ENCODE measurements at regions of chr2 and their contacts with region 1.

Region 1: GRCh38 chr2:37357530-37357929 is 13.1 kb downstream of the QPCT start:
- DNase-seq: no peak
- ATAC-seq: no peak
- H3K4me3 Mint-ChIP-seq: no peak overlapping the region
- H3K27ac Mint-ChIP-seq: no peak overlapping the region
- H3K4me1 Mint-ChIP-seq: peaks cover 3% of the 10 kb centered on the region
- H3K27me3 Mint-ChIP-seq: peaks cover 8% of the 10 kb centered on the region
- CTCF ChIP-seq: no peak

Region 2: GRCh38 chr2:38060236-38061018 is 702.9 kb after region 1 on chr2:
- CTCF ChIA-PET with region 1: no interaction called
- POLR2A ChIA-PET with region 1: interaction called, 11 read pairs
- intact Hi-C with region 1: no loop called
- DNase-seq: no peak
- ATAC-seq: no peak
- H3K4me3 Mint-ChIP-seq: no peak overlapping the region
- H3K27ac Mint-ChIP-seq: no peak overlapping the region
- H3K4me1 Mint-ChIP-seq: no peaks in the 10 kb centered on the region
- H3K27me3 Mint-ChIP-seq: peaks cover 5% of the 10 kb centered on the region
- CTCF ChIP-seq: no peak